ENCODE measurements at regions of chr1 and their contacts with region 1.

Region 1: GRCh38 chr1:5514519-5515183 is 477.6 kb downstream of the NPHP4 start:
- DNase-seq: peak in 4 of 5 donors; percentile 47 to 57 (median 56)
- H3K4me3 ChIP-seq: no peak overlapping the region
- H3K4me3 Mint-ChIP-seq: no peak overlapping the region
- H3K27ac ChIP-seq: no peak overlapping the region
- H3K27ac Mint-ChIP-seq: no peak overlapping the region
- H3K4me1 ChIP-seq: peaks cover 3% of the 10 kb centered on the region
- H3K4me1 Mint-ChIP-seq: peaks cover 0 to 5% (median 1%) of the 10 kb centered on the region in 4 donors
- H3K27me3 ChIP-seq: no peaks in the 10 kb centered on the region
- H3K27me3 Mint-ChIP-seq: peaks cover 3 to 8% of the 10 kb centered on the region in 2 donors

Region 2: DNA sequence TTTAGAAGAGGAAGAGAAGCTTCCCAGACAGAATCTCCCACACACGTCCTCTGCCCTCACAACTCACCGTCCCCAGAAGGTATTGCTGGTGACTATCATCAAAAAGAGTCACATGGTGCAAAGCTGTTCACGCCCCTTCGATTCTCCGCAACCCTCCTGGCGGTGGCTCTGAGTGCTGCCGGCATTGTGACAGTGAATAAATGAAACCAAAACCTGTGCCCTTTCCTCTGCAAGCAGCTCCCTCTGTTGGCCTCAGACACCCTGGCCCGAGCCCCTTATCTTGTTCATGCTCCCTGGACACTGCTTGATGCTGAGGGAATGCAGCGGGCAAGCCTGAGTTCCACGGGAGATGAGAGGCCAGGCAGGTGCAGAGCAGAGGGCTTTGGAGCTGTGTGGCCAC is 32.8 kb before region 1 on chr1:
- CTCF ChIA-PET with region 1: interaction called, 11 read pairs
- POLR2A ChIA-PET with region 1: no interaction called
- intact Hi-C with region 1: no loop called
- DNase-seq: peak; percentile 46 to 56 (median 47)
- H3K4me3 ChIP-seq: no peak overlapping the region
- H3K4me3 Mint-ChIP-seq: peak overlapping the region in 3 of 8 donors; percentile 13 to 65 (median 63)
- H3K27ac ChIP-seq: no peak overlapping the region
- H3K27ac Mint-ChIP-seq: peak overlapping the region in 2 of 7 donors; percentile 53 to 63
- H3K4me1 ChIP-seq: peaks cover 9% of the 10 kb centered on the region
- H3K4me1 Mint-ChIP-seq: peaks cover 5 to 13% (median 8%) of the 10 kb centered on the region in 4 donors
- H3K27me3 ChIP-seq: no peaks in the 10 kb centered on the region
- H3K27me3 Mint-ChIP-seq: peaks cover 2% of the 10 kb centered on the region in 2 donors

Region 3: DNA sequence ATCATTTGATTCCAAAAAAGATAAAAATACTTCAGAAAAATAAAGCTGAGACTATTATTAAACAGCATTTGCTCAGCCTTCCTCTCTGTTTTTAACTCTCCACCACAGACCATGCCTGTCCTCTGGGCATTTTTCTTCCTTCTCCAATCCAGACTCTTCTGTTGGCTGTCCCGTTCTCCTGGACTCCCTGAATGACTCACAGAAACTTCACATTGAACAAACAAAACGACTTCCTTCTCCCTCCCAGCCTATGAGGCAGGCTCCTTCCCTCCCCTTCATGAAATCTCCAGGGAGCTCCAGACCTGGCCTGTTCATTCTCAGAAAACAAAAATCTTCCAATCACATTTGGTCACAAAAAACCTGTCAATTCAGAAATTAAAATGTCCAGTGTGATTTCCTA is 56.3 kb after region 1 on chr1:
- CTCF ChIA-PET with region 1: no interaction called
- POLR2A ChIA-PET with region 1: no interaction called
- intact Hi-C with region 1: no loop called
- DNase-seq: no peak
- H3K4me3 ChIP-seq: no peak overlapping the region
- H3K4me3 Mint-ChIP-seq: no peak overlapping the region
- H3K27ac ChIP-seq: no peak overlapping the region
- H3K27ac Mint-ChIP-seq: no peak overlapping the region
- H3K4me1 ChIP-seq: no peaks in the 10 kb centered on the region
- H3K4me1 Mint-ChIP-seq: no peaks in the 10 kb centered on the region
- H3K27me3 ChIP-seq: no peaks in the 10 kb centered on the region
- H3K27me3 Mint-ChIP-seq: peaks cover 2 to 3% of the 10 kb centered on the region in 2 donors

Region 4: GRCh38 chr1:5667513-5668325 is 153.1 kb after region 1 on chr1:
- CTCF ChIA-PET with region 1: no interaction called
- POLR2A ChIA-PET with region 1: no interaction called
- intact Hi-C with region 1: loop called (anchors 2 kb)
- DNase-seq: peak; percentile 21 to 52 (median 26)
- H3K4me3 ChIP-seq: no peak overlapping the region
- H3K4me3 Mint-ChIP-seq: peak overlapping the region; percentile 67 to 83 (median 76)
- H3K27ac ChIP-seq: no peak overlapping the region
- H3K27ac Mint-ChIP-seq: peak overlapping the region; percentile 59 to 92 (median 87)
- H3K4me1 ChIP-seq: peaks cover 35% of the 10 kb centered on the region
- H3K4me1 Mint-ChIP-seq: peaks cover 7 to 50% (median 18%) of the 10 kb centered on the region in 4 donors
- H3K27me3 ChIP-seq: no peaks in the 10 kb centered on the region
- H3K27me3 Mint-ChIP-seq: peaks cover 0 to 7% of the 10 kb centered on the region in 2 donors

Region 5: DNA sequence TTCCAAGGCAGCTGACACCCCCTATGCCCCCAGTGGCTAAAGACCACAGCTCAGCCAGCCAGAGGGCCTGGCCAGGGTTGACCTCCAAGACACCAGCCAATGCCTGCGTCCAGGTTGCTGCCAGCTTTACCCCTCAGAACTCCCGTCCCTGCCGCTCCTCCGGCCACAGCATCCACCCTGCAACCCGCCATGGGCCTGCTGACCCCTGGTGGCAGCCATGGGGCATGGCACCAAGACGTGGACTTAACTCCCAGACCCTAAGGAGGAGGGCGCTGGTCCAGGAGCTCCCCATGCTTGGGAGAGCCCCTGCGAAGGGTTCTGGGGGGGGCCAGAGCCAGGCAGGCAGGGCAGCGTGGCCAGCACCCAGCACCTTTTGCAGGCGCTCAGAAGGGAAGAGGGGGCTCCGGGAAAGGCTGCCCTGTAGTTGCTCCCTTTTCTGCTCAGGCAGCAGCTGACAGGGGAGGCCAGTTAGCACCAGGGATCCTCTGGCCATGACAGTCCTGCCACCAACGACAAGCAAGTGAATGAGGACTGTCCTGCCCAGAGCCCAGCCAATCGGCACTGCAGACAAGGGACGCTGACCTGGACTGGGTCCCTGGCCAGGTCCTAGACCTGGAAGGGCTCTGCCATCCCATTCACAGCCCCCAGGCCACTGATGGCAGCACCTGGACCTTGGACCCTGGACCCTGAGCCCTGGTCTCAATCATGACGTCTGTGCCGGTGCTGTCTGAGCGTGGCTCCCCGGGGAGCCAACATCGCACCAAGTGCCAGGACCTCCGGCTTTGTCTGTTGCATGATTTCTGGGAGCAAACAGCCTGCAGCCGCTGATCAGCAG is 231.3 kb after region 1 on chr1:
- CTCF ChIA-PET with region 1: interaction called, 17 read pairs
- POLR2A ChIA-PET with region 1: no interaction called
- intact Hi-C with region 1: no loop called
- DNase-seq: peak; percentile 38 to 48 (median 43)
- H3K4me3 ChIP-seq: no peak overlapping the region
- H3K4me3 Mint-ChIP-seq: no peak overlapping the region
- H3K27ac ChIP-seq: no peak overlapping the region
- H3K27ac Mint-ChIP-seq: no peak overlapping the region
- H3K4me1 ChIP-seq: no peaks in the 10 kb centered on the region
- H3K4me1 Mint-ChIP-seq: peaks cover 0 to 8% (median 1%) of the 10 kb centered on the region in 4 donors
- H3K27me3 ChIP-seq: no peaks in the 10 kb centered on the region
- H3K27me3 Mint-ChIP-seq: peaks cover 12 to 20% of the 10 kb centered on the region in 2 donors

Region 6: GRCh38 chr1:5915587-5916571 is 401.2 kb after region 1 on chr1:
- CTCF ChIA-PET with region 1: interaction called, 14 read pairs
- POLR2A ChIA-PET with region 1: no interaction called
- intact Hi-C with region 1: no loop called
- DNase-seq: peak; percentile 21 to 49 (median 28)
- H3K4me3 ChIP-seq: no peak overlapping the region
- H3K4me3 Mint-ChIP-seq: no peak overlapping the region
- H3K27ac ChIP-seq: no peak overlapping the region
- H3K27ac Mint-ChIP-seq: peak overlapping the region in 3 of 7 donors; percentile 2 to 43 (median 24)
- H3K4me1 ChIP-seq: peaks cover 5% of the 10 kb centered on the region
- H3K4me1 Mint-ChIP-seq: peaks cover 5 to 12% (median 8%) of the 10 kb centered on the region in 4 donors
- H3K27me3 ChIP-seq: no peaks in the 10 kb centered on the region
- H3K27me3 Mint-ChIP-seq: no peaks in the 10 kb centered on the region

Region 7: DNA sequence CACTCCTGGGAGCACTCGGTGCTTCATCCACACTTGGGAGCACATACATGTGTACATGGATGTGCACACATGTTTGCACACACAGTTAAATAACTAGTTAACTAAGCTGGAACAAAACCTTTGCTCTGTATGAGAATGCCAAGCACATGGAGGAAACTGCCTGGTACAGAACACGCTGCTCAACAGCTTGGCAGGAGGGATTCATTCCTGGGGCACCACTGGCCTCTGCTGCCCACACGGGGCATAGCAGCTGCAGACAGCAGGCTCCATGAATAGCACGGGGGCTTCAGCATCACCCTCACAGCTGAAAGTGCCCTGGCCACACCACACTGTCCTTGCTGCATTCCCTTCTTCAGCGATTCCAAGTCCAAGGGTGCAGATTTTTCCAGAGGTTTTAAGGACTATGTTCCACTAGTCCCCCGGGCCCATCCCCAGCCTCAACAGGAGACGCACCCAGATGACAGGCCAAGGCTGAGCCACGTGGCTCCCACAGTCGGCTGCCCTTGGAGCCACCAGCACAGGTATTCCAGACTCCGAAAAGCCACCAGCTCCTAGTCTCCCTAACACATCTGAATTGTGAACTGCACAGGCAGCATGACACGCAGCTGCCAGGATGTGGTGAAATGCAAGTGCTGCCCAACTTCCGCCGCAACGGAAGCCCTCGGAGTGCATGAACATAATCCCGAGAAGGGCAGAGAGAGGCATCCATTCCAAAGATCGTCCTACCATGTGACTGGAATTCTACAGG is 460.7 kb after region 1 on chr1:
- CTCF ChIA-PET with region 1: interaction called, 10 read pairs
- POLR2A ChIA-PET with region 1: no interaction called
- intact Hi-C with region 1: no loop called
- DNase-seq: peak in 4 of 5 donors; percentile 13 to 47 (median 18)
- H3K4me3 ChIP-seq: no peak overlapping the region
- H3K4me3 Mint-ChIP-seq: peak overlapping the region in 3 of 8 donors; percentile 38 to 68 (median 60)
- H3K27ac ChIP-seq: no peak overlapping the region
- H3K27ac Mint-ChIP-seq: peak overlapping the region in 4 of 7 donors; percentile 4 to 77 (median 45)
- H3K4me1 ChIP-seq: peaks cover 8% of the 10 kb centered on the region
- H3K4me1 Mint-ChIP-seq: peaks cover 6 to 15% (median 11%) of the 10 kb centered on the region in 4 donors
- H3K27me3 ChIP-seq: no peaks in the 10 kb centered on the region
- H3K27me3 Mint-ChIP-seq: no peaks in the 10 kb centered on the region

Region 8: GRCh38 chr1:6185635-6186382 is 671.2 kb after region 1 on chr1:
- CTCF ChIA-PET with region 1: no interaction called
- POLR2A ChIA-PET with region 1: no interaction called
- intact Hi-C with region 1: loop called (anchors 5 kb)
- DNase-seq: peak in 2 of 5 donors; percentile 20 to 26
- H3K4me3 ChIP-seq: no peak overlapping the region
- H3K4me3 Mint-ChIP-seq: no peak overlapping the region
- H3K27ac ChIP-seq: no peak overlapping the region
- H3K27ac Mint-ChIP-seq: peak overlapping the region in 3 of 7 donors; percentile 2 to 48 (median 40)
- H3K4me1 ChIP-seq: peaks cover 7% of the 10 kb centered on the region
- H3K4me1 Mint-ChIP-seq: peaks cover 15 to 38% (median 30%) of the 10 kb centered on the region in 4 donors
- H3K27me3 ChIP-seq: no peaks in the 10 kb centered on the region
- H3K27me3 Mint-ChIP-seq: peaks cover 8 to 12% of the 10 kb centered on the region in 2 donors

Measured in CD4-positive, alpha-beta memory T cell (primary cell).